ENCODE measurements at regions of chr19 and their contacts with region 1.

Region 1: DNA sequence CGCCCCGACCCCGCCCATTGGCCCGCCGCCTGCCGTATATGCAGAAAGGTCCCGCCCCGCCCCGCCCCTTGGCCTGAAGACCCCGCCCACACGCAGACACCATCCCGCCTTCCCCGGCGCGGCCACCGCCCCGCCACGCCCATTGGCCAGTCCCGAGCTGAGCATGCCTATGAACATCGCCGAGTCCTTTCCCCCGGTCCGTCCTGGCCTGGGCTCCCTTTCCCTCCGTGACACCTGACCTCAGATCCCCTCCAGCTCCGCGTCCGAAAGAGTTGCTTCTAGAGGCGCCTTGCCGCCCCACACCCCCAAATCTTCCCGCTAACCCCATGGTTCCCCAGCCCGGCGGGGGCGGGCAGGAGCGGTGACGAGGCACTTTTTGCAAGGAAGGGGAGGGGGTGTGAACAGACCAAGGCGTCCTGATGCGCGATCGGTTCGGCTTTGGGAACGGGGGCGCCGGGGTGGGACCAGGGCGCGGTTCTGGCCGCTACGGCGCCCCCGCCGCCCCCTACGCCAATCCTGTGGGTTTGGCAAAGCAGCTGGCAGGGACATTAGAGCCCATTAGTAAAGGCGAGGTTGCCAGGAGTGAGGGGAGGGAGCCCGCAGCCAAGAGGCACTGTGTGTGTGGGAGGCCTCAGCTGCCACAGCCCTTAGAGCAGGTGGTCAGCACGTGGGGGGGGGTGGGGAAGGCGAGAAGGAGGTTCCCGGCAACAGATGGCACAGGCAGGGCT is 406 bp upstream of the NUMBL start:
- DNase-seq: peak; percentile 98 to 100
- ATAC-seq: peak; percentile 60 to 89
- H3K4me3 ChIP-seq: peak overlapping the region; percentile 73
- H3K27ac ChIP-seq: peak overlapping the region; percentile 93 to 99
- H3K4me1 ChIP-seq: peaks cover 42% of the 10 kb centered on the region
- CTCF ChIP-seq: no peak
- EP300 ChIP-seq: peak in 1 of 2 experiments; percentile 20; a peak in 1 of 5 replicates
- POLR2A ChIP-seq: peak; percentile 79
- RAD21 ChIP-seq: no peak; a peak in 1 of 5 replicates

Region 2: GRCh38 chr19:40642757-40643305 is 48.0 kb before region 1 on chr19:
- CTCF ChIA-PET with region 1: no interaction called
- POLR2A ChIA-PET with region 1: no interaction called
- DNase-seq: no peak
- ATAC-seq: no peak
- H3K4me3 ChIP-seq: no peak overlapping the region
- H3K27ac ChIP-seq: no peak overlapping the region
- H3K4me1 ChIP-seq: peaks cover 46% of the 10 kb centered on the region
- CTCF ChIP-seq: no peak
- EP300 ChIP-seq: no peak
- POLR2A ChIP-seq: no peak
- RAD21 ChIP-seq: no peak

Region 3: DNA sequence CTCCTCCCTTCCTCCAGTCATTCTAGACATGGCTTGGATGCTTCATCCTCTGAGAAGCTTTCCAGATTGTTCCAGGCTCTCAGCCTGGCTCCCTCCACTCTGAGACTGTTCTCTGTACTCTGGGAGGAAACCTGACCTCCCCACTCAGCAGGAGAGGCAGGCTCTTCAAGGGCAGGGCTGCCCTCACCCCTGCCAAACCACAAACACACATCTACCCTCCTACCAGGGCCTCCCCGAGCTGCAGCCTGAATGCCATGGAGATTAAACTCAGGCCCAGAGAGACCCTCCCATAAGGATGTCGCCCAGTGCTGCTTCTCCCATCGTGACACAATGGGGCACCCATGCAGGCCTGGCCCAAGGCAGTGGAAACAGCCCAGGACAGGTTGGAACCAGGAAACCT is 16.6 kb before region 1 on chr19:
- CTCF ChIA-PET with region 1: interaction called, 11 read pairs
- POLR2A ChIA-PET with region 1: interaction called, 5 read pairs
- DNase-seq: no peak
- ATAC-seq: no peak; a peak in 1 of 6 replicates
- H3K4me3 ChIP-seq: no peak overlapping the region
- H3K27ac ChIP-seq: no peak overlapping the region
- H3K4me1 ChIP-seq: no peaks in the 10 kb centered on the region
- CTCF ChIP-seq: no peak
- EP300 ChIP-seq: no peak
- POLR2A ChIP-seq: no peak
- RAD21 ChIP-seq: no peak

Region 4: DNA sequence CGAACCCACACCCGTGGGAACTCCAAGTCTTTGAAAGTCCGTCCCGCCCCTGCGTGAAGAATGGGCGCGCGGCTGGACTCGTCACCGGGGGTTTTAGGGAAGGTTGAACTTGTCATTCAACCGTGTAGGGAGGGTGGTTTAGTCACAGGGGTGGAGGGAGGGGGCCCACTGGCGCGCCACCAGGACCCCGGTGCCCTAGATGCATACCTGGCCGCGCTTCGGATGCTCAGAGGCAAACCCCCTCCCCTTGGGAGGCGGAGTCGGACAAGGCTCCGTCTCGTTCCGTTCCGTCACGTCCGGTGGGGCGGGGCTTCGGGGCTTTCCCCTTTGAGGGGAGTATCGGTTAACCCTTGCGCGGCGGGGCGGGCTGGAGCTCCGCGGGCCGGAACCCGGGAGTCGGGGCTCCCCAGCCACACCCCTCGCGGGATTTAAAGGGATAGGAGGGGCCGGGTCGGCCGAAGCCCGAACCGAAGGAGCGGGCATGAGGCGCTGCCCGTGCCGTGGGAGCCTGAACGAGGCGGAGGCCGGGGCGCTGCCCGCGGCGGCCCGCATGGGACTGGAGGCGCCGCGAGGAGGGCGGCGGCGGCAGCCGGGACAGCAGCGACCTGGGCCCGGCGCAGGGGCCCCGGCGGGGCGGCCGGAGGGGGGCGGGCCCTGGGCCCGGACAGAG is 25.9 kb after region 1 on chr19 and contains the starts of genes COQ8B and ITPKC:
- CTCF ChIA-PET with region 1: interaction called, 3 read pairs
- POLR2A ChIA-PET with region 1: interaction called, 37 read pairs
- DNase-seq: peak; percentile 99 to 100
- ATAC-seq: peak; percentile 45 to 61
- H3K4me3 ChIP-seq: peak within 1 kb of the TSS; percentile 64
- H3K27ac ChIP-seq: peak within 1 kb of the TSS; percentile 88 to 93
- H3K4me1 ChIP-seq: peaks cover 34% of the 10 kb centered on the region
- CTCF ChIP-seq: no peak
- EP300 ChIP-seq: no peak; a peak in 1 of 5 replicates
- POLR2A ChIP-seq: peak; percentile 60
- RAD21 ChIP-seq: peak in 1 of 2 experiments; percentile 14; a peak in 2 of 5 replicates
- polyA plus RNA-seq, gene COQ8B: 43.9 and 47.2 TPM in 2 replicates
- polyA plus RNA-seq, gene ITPKC: 6.5 and 8.7 TPM in 2 replicates

Measured in A549 (cell line).